ENCODE measurements at regions of chr9 and their contacts with region 1.

Region 1: GRCh38 chr9:83388346-83388745 is 149.9 kb downstream of the FRMD3 start:
- DNase-seq: no peak
- ATAC-seq: no peak
- H3K4me3 ChIP-seq: no peak overlapping the region
- H3K27ac ChIP-seq: no peak overlapping the region
- H3K4me1 ChIP-seq: no peaks in the 10 kb centered on the region
- H3K27me3 ChIP-seq: no peaks in the 10 kb centered on the region
- CTCF ChIP-seq: no peak

Region 2: DNA sequence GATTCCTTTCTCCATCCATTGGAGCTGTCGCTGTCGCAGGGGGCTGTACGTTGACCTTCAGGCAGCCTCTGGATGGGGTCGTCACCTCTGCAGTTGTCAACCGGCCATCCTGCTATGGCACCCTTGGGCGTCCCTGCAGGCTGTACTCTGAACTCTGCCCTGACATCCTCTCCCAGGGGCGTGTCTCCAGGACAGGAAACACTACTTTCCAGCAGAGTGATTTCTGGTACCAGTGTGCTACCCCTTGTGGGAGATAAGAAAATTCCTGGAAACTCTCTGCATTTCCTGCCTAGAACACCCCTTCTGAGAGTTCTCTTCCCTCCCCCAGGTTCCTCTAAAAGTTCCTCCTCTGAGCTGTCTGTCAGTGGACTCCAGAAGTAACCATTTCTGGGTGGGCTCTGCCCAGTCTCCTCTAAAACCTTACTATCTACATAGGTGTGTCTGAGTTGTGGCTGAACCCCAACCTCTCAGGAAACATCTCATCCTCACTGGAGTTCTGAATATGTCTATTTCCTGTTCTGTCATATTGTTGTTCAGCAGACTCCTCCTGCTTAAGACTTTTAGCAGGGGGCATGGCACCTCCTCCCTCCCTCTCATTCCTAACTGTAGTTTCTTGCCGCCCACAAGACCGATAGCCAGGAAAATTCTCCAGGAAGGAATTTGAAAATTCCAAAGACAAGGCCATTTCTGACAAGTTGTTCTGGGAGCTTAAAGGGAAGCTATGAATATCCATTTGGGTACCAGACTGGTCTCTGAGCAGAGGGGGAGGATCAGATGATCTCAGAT is 180.1 kb before region 1 on chr9:
- CTCF ChIA-PET with region 1: interaction called, 18 read pairs
- POLR2A ChIA-PET with region 1: no interaction called
- intact Hi-C with region 1: no loop called
- DNase-seq: no peak
- ATAC-seq: no peak
- H3K4me3 ChIP-seq: no peak overlapping the region
- H3K27ac ChIP-seq: no peak overlapping the region
- H3K4me1 ChIP-seq: no peaks in the 10 kb centered on the region
- H3K27me3 ChIP-seq: no peaks in the 10 kb centered on the region
- CTCF ChIP-seq: no peak

Measured in PC-3 (cell line).